Body of pancreas (tissue), 4 donors: ENCODE measurements at regions of chr12 and their contacts with region 1.

Region 1: GRCh38 chr12:9741726-9742125 is 8.8 kb upstream of the CLECL1 start:
- DNase-seq: peak in 1 of 4 donors; percentile 18
- ATAC-seq: no peak
- H3K4me3 ChIP-seq: no peak overlapping the region
- H3K27ac ChIP-seq: no peak overlapping the region
- H3K4me1 ChIP-seq: peaks cover 15% of the 10 kb centered on the region
- H3K27me3 ChIP-seq: no peaks in the 10 kb centered on the region
- CTCF ChIP-seq: no peak
- POLR2A ChIP-seq: no peak

Region 2: GRCh38 chr12:9673404-9674225 is 68.1 kb before region 1 on chr12:
- intact Hi-C with region 1: no loop called
- DNase-seq: peak in 3 of 4 donors; percentile 33 to 41 (median 39)
- ATAC-seq: no peak
- H3K4me3 ChIP-seq: no peak overlapping the region
- H3K27ac ChIP-seq: no peak overlapping the region
- H3K4me1 ChIP-seq: no peaks in the 10 kb centered on the region
- H3K27me3 ChIP-seq: no peaks in the 10 kb centered on the region
- CTCF ChIP-seq: no peak
- POLR2A ChIP-seq: no peak

Region 3: DNA sequence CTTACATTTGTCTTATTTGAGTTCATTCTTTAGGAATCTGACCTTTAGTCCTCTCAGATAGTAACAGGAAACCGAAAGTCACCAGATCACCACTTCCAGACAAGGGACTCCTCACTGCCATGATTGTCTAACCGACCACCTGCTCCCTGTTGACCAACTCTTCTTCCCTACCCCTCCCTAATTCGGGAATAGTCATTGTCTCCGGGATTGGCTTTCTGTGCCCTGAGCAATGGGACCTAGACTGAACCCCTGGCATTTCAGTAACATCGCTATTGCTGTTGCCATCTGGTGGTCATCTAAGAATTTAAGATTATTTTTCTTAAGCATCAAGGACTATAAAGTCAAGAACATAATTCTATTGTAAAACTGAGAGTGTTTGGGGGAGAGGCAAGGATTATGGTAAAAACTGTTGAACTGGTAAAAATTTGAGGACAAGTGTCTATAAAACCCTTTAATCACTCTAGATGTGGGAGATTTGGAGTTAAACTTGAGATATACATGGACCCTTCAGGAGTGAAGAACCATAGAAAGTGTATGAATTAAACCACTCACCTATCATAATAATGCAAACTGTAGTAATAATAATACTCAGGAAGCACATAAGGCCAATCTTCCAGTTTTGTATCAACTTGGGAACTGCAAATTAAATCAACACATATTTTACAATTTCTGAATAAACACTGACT is 184.1 kb after region 1 on chr12:
- intact Hi-C with region 1: loop called (anchors 10 kb)
- DNase-seq: peak in 1 of 4 donors; percentile 5
- ATAC-seq: peak; percentile 53
- H3K4me3 ChIP-seq: no peak overlapping the region
- H3K27ac ChIP-seq: no peak overlapping the region
- H3K4me1 ChIP-seq: no peaks in the 10 kb centered on the region
- H3K27me3 ChIP-seq: no peaks in the 10 kb centered on the region
- CTCF ChIP-seq: peak in 6 of 7 experiments; percentile 28 to 52 (median 44)
- POLR2A ChIP-seq: no peak

Region 4: GRCh38 chr12:10243818-10244520 is 502.2 kb after region 1 on chr12:
- intact Hi-C with region 1: no loop called
- DNase-seq: no peak
- ATAC-seq: no peak
- H3K4me3 ChIP-seq: no peak overlapping the region
- H3K27ac ChIP-seq: no peak overlapping the region
- H3K4me1 ChIP-seq: no peaks in the 10 kb centered on the region
- H3K27me3 ChIP-seq: no peaks in the 10 kb centered on the region
- CTCF ChIP-seq: no peak
- POLR2A ChIP-seq: no peak